Pancreas (tissue), 10 donors: ENCODE measurements at regions of chr7 and their contacts with region 1.

Region 1: GRCh38 chr7:73879977-73880681 is 19.2 kb downstream of the TMEM270 start:
- DNase-seq: no peak
- ATAC-seq: peak in 1 of 4 donors; percentile 48
- H3K4me3 ChIP-seq: no peak overlapping the region
- H3K27ac ChIP-seq: no peak overlapping the region
- H3K4me1 ChIP-seq: no peaks in the 10 kb centered on the region
- H3K27me3 ChIP-seq: no peaks in the 10 kb centered on the region
- CTCF ChIP-seq: no peak

Region 2: GRCh38 chr7:74002474-74003017 is 122.4 kb after region 1 on chr7:
- intact Hi-C with region 1: loop called in 1 of 3 experiments (anchors 10 kb)
- DNase-seq: no peak
- ATAC-seq: peak in 3 of 4 donors; percentile 23 to 58 (median 57)
- H3K4me3 ChIP-seq: no peak overlapping the region
- H3K27ac ChIP-seq: no peak overlapping the region
- H3K4me1 ChIP-seq: no peaks in the 10 kb centered on the region
- H3K27me3 ChIP-seq: no peaks in the 10 kb centered on the region
- CTCF ChIP-seq: no peak

Region 3: DNA sequence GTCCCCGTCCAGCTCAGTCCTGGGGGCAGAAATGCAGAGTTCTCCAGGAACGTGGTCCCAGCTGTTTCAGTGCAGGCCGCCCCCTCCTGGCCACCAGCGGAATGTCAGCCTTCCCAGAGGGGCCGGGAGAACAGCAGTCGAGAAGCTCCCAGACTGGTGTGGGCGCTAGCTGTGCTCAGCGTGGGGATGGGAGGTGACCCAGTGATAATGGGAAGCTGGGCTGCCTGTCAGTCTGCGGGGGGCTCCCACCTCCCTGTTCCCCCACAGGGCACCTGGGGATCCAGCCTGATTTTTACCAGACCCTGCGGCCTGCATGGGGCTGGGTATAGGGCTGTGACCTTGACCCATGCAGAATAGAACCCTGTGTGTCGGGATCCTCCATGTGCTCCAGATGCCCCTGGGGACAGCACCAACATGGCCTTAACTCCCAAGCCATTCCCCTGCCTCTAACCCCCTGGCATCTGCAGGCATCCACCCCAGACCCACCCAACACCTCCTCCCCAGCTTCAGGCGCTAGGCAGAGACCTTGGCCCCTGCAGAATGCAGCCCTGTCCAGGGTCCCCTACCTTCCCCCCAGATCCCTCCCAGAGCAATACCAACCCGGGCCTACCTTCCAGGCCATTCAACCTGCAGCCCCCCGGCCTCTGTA is 146.9 kb after region 1 on chr7:
- intact Hi-C with region 1: loop called in 1 of 3 experiments (anchors 10 kb)
- DNase-seq: peak; percentile 68 to 91 (median 84)
- ATAC-seq: peak; percentile 57 to 75 (median 70)
- H3K4me3 ChIP-seq: peak overlapping the region in 2 of 4 donors; percentile 63 to 65
- H3K27ac ChIP-seq: peak overlapping the region; percentile 70 to 83 (median 74)
- H3K4me1 ChIP-seq: peaks cover 8 to 24% (median 23%) of the 10 kb centered on the region in 3 donors
- H3K27me3 ChIP-seq: no peaks in the 10 kb centered on the region
- CTCF ChIP-seq: peak; percentile 90 to 94 (median 91)